ENCODE measurements at regions of chr1 and their contacts with region 1.

Region 1: DNA sequence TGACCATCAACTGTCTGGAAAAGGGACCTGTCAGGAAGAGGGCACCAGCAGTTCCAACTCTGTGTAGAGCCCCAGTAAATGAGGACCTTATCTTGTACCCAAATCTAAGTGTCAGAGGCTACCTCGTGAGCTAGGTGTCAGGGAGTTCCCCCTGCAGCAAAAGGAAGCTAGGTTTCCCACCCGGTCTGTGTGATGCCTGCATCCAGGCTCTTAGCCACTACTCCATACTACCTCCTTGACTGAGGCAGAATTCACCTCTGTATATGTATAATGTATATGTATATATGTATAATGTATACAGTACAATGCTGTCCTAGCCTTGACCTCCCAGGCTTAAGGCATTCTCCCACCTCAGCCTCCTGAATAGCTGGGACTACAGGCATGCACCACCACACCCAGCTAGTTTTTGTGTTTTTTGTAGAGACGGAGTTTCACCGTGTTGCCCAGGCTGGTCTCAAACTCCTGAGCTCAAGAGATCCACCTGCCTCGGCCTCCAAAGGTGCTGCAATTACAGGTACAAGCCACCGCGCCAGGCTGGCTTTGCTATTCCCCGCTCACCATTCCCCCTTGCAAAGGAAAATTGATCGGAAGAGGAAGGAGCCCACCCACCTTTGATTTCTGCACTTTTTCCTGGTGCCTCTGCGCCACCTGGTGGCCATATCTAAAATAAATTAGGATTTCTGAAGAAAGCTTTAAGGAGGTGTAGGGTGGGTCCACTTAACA is 15.7 kb upstream of the LUZP1 start:
- DNase-seq: peak in 4 of 5 donors; percentile 27 to 55 (median 50)
- H3K4me3 ChIP-seq: no peak overlapping the region
- H3K4me3 Mint-ChIP-seq: peak overlapping the region in 6 of 7 donors; percentile 74 to 84 (median 82)
- H3K27ac ChIP-seq: no peak overlapping the region
- H3K27ac Mint-ChIP-seq: peak overlapping the region in 6 of 8 donors; percentile 45 to 88 (median 74)
- H3K4me1 ChIP-seq: peaks cover 8% of the 10 kb centered on the region
- H3K4me1 Mint-ChIP-seq: peaks cover 11 to 12% (median 11%) of the 10 kb centered on the region in 3 donors
- H3K27me3 ChIP-seq: no peaks in the 10 kb centered on the region
- H3K27me3 Mint-ChIP-seq: peaks cover 5 to 6% of the 10 kb centered on the region in 2 donors

Region 2: DNA sequence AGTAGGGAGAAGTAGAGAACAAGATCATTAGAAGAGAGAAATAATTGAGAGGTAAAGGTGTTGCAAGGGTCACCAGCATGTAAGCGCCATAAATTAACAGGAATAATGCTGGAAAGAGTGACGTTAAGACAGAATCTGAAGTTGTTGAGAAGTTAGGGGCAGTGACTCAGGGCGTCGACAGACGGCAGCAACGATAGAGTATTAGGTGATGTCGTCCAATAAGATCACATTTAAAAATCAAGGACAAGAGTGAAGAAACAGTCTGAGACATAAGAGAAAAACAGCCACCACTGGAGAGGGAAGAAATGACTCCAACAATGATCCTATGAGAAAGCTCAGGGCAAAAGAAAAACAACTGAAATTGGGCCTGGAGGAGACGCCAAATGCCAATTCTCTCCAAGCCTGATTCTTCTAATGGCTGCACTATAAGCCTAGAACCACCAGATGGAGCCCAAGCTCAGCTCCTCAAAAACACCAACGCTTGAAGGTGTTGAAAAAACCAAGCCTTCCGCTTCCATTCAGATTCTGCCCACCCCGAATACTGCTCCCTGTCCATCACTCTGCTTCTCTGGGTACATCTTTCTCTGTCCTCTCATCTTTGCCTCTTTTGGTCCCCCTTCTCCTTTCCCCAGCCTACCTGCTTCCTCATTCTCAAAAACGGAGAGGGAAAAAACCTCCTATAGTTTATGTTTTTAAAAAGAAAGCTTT is 85.8 kb before region 1 on chr1:
- CTCF ChIA-PET with region 1: interaction called, 317 read pairs
- POLR2A ChIA-PET with region 1: interaction called, 4 read pairs
- DNase-seq: peak; percentile 36 to 74 (median 56)
- H3K4me3 ChIP-seq: no peak overlapping the region
- H3K4me3 Mint-ChIP-seq: peak overlapping the region; percentile 5 to 69 (median 47)
- H3K27ac ChIP-seq: no peak overlapping the region
- H3K27ac Mint-ChIP-seq: peak overlapping the region; percentile 2 to 93 (median 73)
- H3K4me1 ChIP-seq: peaks cover 25% of the 10 kb centered on the region
- H3K4me1 Mint-ChIP-seq: peaks cover 43 to 58% (median 50%) of the 10 kb centered on the region in 3 donors
- H3K27me3 ChIP-seq: no peaks in the 10 kb centered on the region
- H3K27me3 Mint-ChIP-seq: no peaks in the 10 kb centered on the region

Region 3: DNA sequence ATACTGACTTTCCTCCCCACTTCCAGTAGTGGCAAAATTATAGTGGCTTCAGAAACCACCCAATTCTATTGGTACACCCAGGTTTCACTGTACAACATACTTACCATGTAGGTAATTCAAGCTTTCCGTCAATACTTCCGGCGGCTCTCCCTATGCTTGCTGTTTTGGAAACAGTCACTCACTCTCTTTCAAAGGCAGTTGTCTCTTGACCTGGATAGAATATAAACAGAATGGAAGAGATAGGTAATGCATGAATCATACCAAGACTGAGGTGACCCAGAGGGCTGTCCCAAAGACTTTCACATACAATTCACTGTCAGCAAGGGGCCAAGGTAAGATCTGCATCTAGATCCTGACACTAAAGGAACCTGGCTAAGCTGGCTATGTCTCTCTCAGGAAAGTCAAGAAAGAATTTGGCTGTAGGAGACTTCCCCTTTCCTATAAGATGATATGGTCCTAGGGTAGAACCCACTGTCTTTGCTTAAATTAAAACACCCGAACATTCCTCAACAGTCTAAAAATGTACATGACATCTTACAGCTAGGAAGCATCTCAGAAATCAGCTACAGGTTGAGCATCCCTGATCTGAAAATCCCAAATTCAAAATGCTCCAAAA is 75.3 kb before region 1 on chr1:
- CTCF ChIA-PET with region 1: interaction called, 37 read pairs
- POLR2A ChIA-PET with region 1: no interaction called
- DNase-seq: no peak
- H3K4me3 ChIP-seq: no peak overlapping the region
- H3K4me3 Mint-ChIP-seq: peak overlapping the region in 2 of 7 donors; percentile 15 to 39
- H3K27ac ChIP-seq: no peak overlapping the region
- H3K27ac Mint-ChIP-seq: peak overlapping the region in 7 of 8 donors; percentile 17 to 90 (median 71)
- H3K4me1 ChIP-seq: peaks cover 34% of the 10 kb centered on the region
- H3K4me1 Mint-ChIP-seq: peaks cover 48 to 62% (median 56%) of the 10 kb centered on the region in 3 donors
- H3K27me3 ChIP-seq: no peaks in the 10 kb centered on the region
- H3K27me3 Mint-ChIP-seq: peaks cover 0 to 1% of the 10 kb centered on the region in 2 donors

Region 4: GRCh38 chr1:23118957-23119792 is 65.2 kb before region 1 on chr1:
- CTCF ChIA-PET with region 1: interaction called, 29 read pairs
- POLR2A ChIA-PET with region 1: no interaction called
- DNase-seq: peak in 4 of 5 donors; percentile 8 to 80 (median 56)
- H3K4me3 ChIP-seq: peak overlapping the region; percentile 52
- H3K4me3 Mint-ChIP-seq: peak overlapping the region; percentile 58 to 88 (median 75)
- H3K27ac ChIP-seq: peak overlapping the region; percentile 88
- H3K27ac Mint-ChIP-seq: peak overlapping the region; percentile 91 to 99 (median 94)
- H3K4me1 ChIP-seq: peaks cover 49% of the 10 kb centered on the region
- H3K4me1 Mint-ChIP-seq: peaks cover 55 to 77% (median 70%) of the 10 kb centered on the region in 3 donors
- H3K27me3 ChIP-seq: no peaks in the 10 kb centered on the region
- H3K27me3 Mint-ChIP-seq: peaks cover 0 to 3% of the 10 kb centered on the region in 2 donors

Region 5: DNA sequence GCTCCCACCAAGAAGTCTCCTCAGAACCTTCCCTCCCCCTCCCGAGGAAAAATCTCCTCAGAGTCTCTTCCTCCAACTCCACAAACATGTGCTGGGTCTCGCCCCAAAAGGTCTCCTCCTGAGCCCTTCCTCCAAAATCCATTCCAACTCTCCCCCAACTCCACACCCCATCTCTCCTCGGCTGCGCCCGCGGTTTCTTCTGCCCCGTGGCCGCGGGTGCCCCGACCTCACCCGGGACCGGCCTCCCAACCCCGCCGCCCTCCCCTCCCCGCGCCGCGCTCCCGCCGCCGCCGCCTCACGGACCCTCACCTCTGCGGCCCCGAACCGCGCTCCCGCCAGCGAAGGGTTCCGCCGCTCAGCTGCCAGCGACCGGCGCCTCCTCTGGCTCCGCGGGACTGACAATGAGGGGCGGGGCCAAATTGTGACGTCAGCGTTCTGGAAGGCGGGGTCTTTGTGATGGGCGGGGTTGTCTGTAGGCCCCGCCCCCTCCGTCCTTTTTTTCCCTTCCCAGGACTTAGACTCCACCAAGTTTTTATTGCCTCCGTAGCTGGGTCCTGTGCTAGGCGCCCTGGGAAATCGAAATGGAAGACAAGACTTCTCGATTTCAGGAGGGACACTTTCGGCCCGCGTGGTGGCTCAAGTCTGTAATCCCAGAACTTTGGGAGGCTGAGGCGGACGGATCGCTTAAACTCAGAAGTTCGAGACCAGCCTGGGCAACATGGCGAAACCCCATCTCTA is 15.7 kb before region 1 on chr1 and contains the start of gene LUZP1:
- CTCF ChIA-PET with region 1: interaction called, 65 read pairs
- POLR2A ChIA-PET with region 1: no interaction called
- DNase-seq: peak; percentile 78 to 91 (median 81)
- H3K4me3 ChIP-seq: peak within 1 kb of the TSS; percentile 85
- H3K4me3 Mint-ChIP-seq: peak within 1 kb of the TSS; percentile 93 to 98 (median 96)
- H3K27ac ChIP-seq: peak within 1 kb of the TSS; percentile 79
- H3K27ac Mint-ChIP-seq: peak within 1 kb of the TSS; percentile 81 to 99 (median 94)
- H3K4me1 ChIP-seq: peaks cover 17% of the 10 kb centered on the region
- H3K4me1 Mint-ChIP-seq: peaks cover 34 to 41% (median 37%) of the 10 kb centered on the region in 3 donors
- H3K27me3 ChIP-seq: no peaks in the 10 kb centered on the region
- H3K27me3 Mint-ChIP-seq: no peaks in the 10 kb centered on the region
- total RNA-seq, gene LUZP1: 19.5 to 19.6 TPM

Region 6: DNA sequence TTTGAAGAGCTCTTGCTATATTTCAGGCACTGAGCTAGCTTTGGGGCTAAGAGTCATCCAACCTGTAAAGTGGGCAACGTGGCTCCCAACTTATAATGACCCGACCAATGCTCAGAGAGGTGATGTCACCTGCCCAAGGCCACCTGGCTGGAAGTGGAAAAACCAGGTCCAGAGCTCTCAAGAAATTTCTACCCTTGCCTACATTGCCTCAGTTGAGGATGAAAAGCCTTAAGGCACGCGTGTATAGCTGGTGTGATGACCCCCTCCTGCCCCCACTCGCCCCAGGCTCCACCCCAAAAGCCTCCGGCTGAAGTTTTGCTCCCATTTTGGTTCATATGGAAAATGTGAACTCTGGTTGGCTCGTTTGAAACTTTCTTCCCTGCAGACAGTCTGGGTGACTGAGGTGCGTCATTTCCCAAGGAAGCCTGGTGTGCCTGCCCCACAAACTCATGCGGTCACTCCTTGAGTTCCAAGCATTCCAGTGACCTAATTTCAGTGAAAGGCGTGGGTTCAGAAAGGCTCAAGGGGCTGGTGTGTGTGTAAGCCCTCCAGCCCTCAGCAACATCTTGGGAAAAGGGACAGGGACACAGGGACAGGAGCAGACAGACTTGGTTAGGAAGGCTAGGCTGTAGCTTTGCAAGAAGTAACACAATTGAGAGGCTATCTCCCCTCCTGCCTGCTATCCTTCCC is 12.4 kb after region 1 on chr1:
- CTCF ChIA-PET with region 1: interaction called, 35 read pairs
- POLR2A ChIA-PET with region 1: no interaction called
- DNase-seq: no peak
- H3K4me3 ChIP-seq: no peak overlapping the region
- H3K4me3 Mint-ChIP-seq: no peak overlapping the region
- H3K27ac ChIP-seq: no peak overlapping the region
- H3K27ac Mint-ChIP-seq: no peak overlapping the region
- H3K4me1 ChIP-seq: no peaks in the 10 kb centered on the region
- H3K4me1 Mint-ChIP-seq: no peaks in the 10 kb centered on the region
- H3K27me3 ChIP-seq: no peaks in the 10 kb centered on the region
- H3K27me3 Mint-ChIP-seq: peaks cover 12 to 31% of the 10 kb centered on the region in 2 donors

Region 7: GRCh38 chr1:23224714-23225648 is 40.6 kb after region 1 on chr1:
- CTCF ChIA-PET with region 1: no interaction called
- POLR2A ChIA-PET with region 1: no interaction called
- DNase-seq: no peak
- H3K4me3 ChIP-seq: no peak overlapping the region
- H3K4me3 Mint-ChIP-seq: no peak overlapping the region
- H3K27ac ChIP-seq: no peak overlapping the region
- H3K27ac Mint-ChIP-seq: no peak overlapping the region
- H3K4me1 ChIP-seq: no peaks in the 10 kb centered on the region
- H3K4me1 Mint-ChIP-seq: no peaks in the 10 kb centered on the region
- H3K27me3 ChIP-seq: peaks cover 7% of the 10 kb centered on the region
- H3K27me3 Mint-ChIP-seq: peaks cover 22 to 58% of the 10 kb centered on the region in 2 donors